Activated CD4-positive, alpha-beta T cell treated with anti-CD3 and anti-CD28 coated beads for 36 hours (primary cell): ENCODE measurements at regions of chrX and their contacts with region 1.

Region 1: GRCh38 chrX:85003655-85004244 is at the start of gene APOOL:
- DNase-seq: peak; percentile 88
- ATAC-seq: peak; percentile 93
- H3K4me3 Mint-ChIP-seq: peak within 1 kb of the TSS; percentile 79
- H3K27ac Mint-ChIP-seq: peak within 1 kb of the TSS; percentile 58
- H3K4me1 Mint-ChIP-seq: peaks cover 21% of the 10 kb centered on the region
- H3K27me3 Mint-ChIP-seq: no peaks in the 10 kb centered on the region
- total RNA-seq, gene APOOL: 18.3 to 22.3 TPM

Region 2: DNA sequence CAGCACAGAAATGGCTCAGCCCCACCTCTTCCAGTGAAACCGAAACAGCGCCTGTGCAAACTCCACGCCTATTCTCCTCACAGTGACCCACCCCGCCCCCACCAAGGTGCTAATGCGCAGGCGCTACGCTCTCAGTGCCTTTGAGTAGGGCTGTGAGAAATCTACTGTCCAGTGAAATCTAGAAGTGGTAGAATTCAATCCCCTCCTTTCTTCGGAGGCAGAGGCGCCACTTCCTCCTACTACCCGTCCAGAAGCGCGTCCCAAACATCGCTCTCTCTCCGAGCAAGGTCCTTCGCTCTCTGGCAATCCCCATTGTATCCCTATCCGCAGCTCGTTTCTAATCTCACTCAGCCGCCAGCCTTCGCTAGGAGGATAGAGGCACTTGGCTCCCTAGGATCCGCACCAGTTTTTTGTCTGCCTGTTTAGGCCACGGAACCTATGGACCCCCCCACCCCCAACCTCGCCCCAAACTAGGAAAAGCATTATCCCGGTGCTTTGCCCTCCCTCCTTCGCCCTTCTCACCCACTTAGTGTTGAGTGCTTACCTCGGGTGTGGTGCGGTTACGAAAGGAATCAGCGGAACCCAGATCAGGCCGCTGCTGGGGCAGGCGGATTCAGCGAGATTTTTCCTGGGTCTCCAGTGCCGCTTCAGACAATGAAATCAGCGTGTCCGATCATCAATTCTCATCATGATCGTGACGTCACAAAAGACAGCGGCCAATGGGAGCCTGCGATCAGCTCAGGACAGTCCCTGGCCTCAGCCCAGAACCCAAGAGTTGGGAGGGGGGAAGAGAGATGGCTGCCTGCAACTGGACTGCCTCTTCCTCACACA is 501.7 kb before region 1 on chrX and contains the start of gene HDX:
- CTCF ChIA-PET with region 1: no interaction called
- POLR2A ChIA-PET with region 1: no interaction called
- intact Hi-C with region 1: loop called in 1 of 2 experiments (anchors 10 kb)
- DNase-seq: peak; percentile 82
- ATAC-seq: peak; percentile 98
- H3K4me3 Mint-ChIP-seq: peak within 1 kb of the TSS; percentile 79
- H3K27ac Mint-ChIP-seq: peak within 1 kb of the TSS; percentile 82
- H3K4me1 Mint-ChIP-seq: no peaks in the 10 kb centered on the region
- H3K27me3 Mint-ChIP-seq: no peaks in the 10 kb centered on the region
- total RNA-seq, gene HDX: 1.5 to 2.6 TPM

Region 3: DNA sequence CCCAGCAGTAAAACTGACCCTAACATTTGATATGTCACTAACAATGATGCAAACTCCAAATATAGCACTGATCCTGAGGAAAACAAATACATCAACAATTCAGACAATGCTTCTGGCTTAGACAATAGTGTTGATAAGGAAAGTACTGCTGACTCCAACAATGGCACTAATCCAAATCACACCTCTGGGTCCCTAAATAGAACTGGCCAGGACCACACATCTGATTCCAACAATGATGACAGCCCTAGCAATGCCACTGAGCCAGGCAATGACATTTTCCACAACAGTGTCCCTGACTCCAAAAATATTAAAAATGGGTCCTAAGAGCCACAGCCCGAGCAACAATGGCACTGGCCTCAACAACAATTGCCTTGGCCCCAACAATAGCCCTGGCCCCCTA is 243.2 kb before region 1 on chrX:
- CTCF ChIA-PET with region 1: no interaction called
- POLR2A ChIA-PET with region 1: no interaction called
- intact Hi-C with region 1: no loop called
- DNase-seq: no peak
- ATAC-seq: no peak
- H3K4me3 Mint-ChIP-seq: no peak overlapping the region
- H3K27ac Mint-ChIP-seq: no peak overlapping the region
- H3K4me1 Mint-ChIP-seq: no peaks in the 10 kb centered on the region
- H3K27me3 Mint-ChIP-seq: no peaks in the 10 kb centered on the region

Region 4: GRCh38 chrX:84907324-84907968 is 96.3 kb before region 1 on chrX:
- CTCF ChIA-PET with region 1: no interaction called
- POLR2A ChIA-PET with region 1: no interaction called
- intact Hi-C with region 1: no loop called
- DNase-seq: no peak
- ATAC-seq: no peak
- H3K4me3 Mint-ChIP-seq: no peak overlapping the region
- H3K27ac Mint-ChIP-seq: no peak overlapping the region
- H3K4me1 Mint-ChIP-seq: no peaks in the 10 kb centered on the region
- H3K27me3 Mint-ChIP-seq: peaks cover 2% of the 10 kb centered on the region

Region 5: GRCh38 chrX:85037114-85037513 is 33.4 kb after region 1 on chrX:
- CTCF ChIA-PET with region 1: no interaction called
- POLR2A ChIA-PET with region 1: no interaction called
- intact Hi-C with region 1: no loop called
- DNase-seq: no peak
- ATAC-seq: no peak
- H3K4me3 Mint-ChIP-seq: no peak overlapping the region
- H3K27ac Mint-ChIP-seq: no peak overlapping the region
- H3K4me1 Mint-ChIP-seq: peaks cover 9% of the 10 kb centered on the region
- H3K27me3 Mint-ChIP-seq: no peaks in the 10 kb centered on the region

Region 6: DNA sequence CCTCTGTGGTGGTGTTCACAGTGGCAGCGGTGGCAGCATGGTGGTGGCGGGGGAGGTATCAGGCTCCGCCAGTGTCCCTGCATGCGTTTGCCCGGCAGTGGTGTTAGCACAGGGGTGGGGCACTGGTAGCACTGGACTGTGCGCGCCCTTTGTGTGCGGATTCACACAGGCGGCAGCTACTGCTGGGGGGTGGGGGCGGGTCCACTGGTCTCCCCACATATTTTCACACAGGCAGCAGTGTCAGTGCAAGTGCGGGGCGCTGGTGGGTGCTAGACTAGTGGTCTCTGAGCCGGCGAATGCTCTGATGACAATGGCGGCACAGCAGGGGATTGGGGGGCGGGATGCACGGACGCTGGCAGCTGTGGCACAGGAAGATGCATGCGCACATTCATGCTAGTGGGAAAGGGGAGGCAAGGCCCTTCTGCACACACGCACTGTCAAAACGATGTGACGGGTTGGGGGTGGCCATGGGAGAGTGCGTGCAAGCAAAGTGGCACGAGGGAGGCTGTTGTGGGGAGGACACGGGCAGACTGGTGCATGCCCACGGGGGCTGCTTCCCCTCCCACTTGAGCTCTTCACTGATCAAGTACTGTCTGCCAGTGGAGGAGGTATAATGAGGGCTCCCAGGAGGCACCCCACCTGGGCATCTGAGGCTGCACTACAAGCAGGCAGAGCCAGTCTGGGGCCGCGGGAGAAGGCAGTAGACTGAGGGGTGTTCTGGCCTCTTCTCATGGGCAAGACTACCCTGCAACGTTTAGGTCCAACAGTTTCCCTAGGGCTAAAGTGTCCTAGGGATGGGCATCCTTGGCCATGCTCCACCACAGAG is 322.7 kb after region 1 on chrX:
- CTCF ChIA-PET with region 1: no interaction called
- POLR2A ChIA-PET with region 1: no interaction called
- intact Hi-C with region 1: no loop called
- DNase-seq: no peak
- ATAC-seq: no peak
- H3K4me3 Mint-ChIP-seq: no peak overlapping the region
- H3K27ac Mint-ChIP-seq: no peak overlapping the region
- H3K4me1 Mint-ChIP-seq: no peaks in the 10 kb centered on the region
- H3K27me3 Mint-ChIP-seq: no peaks in the 10 kb centered on the region

Region 7: GRCh38 chrX:86047174-86047935 is 1043.6 kb after region 1 on chrX and contains the start of gene CHM:
- CTCF ChIA-PET with region 1: no interaction called
- POLR2A ChIA-PET with region 1: no interaction called
- intact Hi-C with region 1: loop called in 1 of 2 experiments (anchors 5 kb)
- DNase-seq: peak; percentile 70
- ATAC-seq: peak; percentile 96
- H3K4me3 Mint-ChIP-seq: no peak within 1 kb of the TSS
- H3K27ac Mint-ChIP-seq: no peak within 1 kb of the TSS
- H3K4me1 Mint-ChIP-seq: peaks cover 13% of the 10 kb centered on the region
- H3K27me3 Mint-ChIP-seq: peaks cover 2% of the 10 kb centered on the region
- total RNA-seq, gene CHM: 10.9 to 14.7 TPM